Endothelial cell of umbilical vein (primary cell): ENCODE measurements at regions of chr18 and their contacts with region 1.

Region 1: DNA sequence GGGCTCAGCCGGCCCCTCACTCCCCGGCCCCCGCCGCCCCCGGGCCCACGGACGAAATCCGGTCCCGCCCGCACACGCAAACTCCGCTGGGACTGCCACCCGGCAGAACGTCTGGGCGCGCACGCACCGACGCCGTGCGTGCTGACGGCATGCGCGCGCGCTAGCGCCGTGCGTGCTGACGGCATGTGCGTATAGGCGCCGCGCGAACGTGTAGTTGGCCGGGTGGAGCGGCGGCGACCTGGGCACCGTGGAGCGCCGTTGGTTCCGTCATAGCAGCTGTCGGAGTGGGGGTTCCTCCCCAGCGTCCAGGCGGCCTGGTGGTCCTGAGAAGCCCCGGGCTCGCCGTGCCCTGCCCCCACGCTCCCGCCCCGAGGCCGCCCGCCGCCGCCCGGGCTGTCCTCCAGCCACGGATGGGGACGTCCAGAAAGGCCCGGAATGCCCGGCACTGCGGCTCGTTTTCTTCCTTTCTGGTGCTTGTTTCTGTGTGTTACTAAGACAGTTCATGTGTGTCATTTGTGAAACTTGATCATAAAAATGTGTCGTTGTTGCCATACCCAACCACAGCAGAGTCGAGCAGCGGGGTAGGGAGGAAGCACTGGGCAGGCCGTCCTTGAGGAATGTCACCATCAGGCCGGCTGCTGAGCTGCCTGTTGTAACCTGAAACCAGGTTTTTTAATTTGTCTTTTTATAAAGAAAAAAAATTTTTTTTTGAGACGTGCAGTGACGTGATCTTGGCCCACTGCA is at the start of gene TXNL4A:
- DNase-seq: peak; percentile 88
- H3K4me3 ChIP-seq: peak within 1 kb of the TSS; percentile 69 to 96 (median 96)
- H3K27ac ChIP-seq: peak within 1 kb of the TSS; percentile 43
- H3K4me1 ChIP-seq: peaks cover 13% of the 10 kb centered on the region
- H3K27me3 ChIP-seq: no peaks in the 10 kb centered on the region
- CTCF ChIP-seq: no peak
- POLR2A ChIP-seq: peak; percentile 96
- total RNA-seq, gene TXNL4A: 147 and 148 TPM in 2 replicates

Region 2: GRCh38 chr18:79679111-79679872 is 309.3 kb before region 1 on chr18 and contains the start of gene CTDP1:
- CTCF ChIA-PET with region 1: no interaction called
- POLR2A ChIA-PET with region 1: no interaction called
- dilution Hi-C with region 1: no loop called
- intact Hi-C with region 1: loop called (anchors 1 kb)
- DNase-seq: peak; percentile 99
- H3K4me3 ChIP-seq: peak within 1 kb of the TSS; percentile 82 to 99 (median 83)
- H3K27ac ChIP-seq: peak within 1 kb of the TSS; percentile 73
- H3K4me1 ChIP-seq: peaks cover 16% of the 10 kb centered on the region
- H3K27me3 ChIP-seq: no peaks in the 10 kb centered on the region
- CTCF ChIP-seq: no peak
- POLR2A ChIP-seq: peak; percentile 25
- total RNA-seq, gene CTDP1: 23.5 and 27.6 TPM in 2 replicates

Region 3: GRCh38 chr18:79951578-79952455 is 36.8 kb before region 1 on chr18 and contains the start of gene SLC66A2:
- CTCF ChIA-PET with region 1: no interaction called
- POLR2A ChIA-PET with region 1: no interaction called
- dilution Hi-C with region 1: no loop called
- intact Hi-C with region 1: loop called (anchors 1 kb)
- DNase-seq: peak; percentile 78
- H3K4me3 ChIP-seq: peak within 1 kb of the TSS; percentile 50 to 96 (median 71)
- H3K27ac ChIP-seq: peak within 1 kb of the TSS; percentile 4
- H3K4me1 ChIP-seq: peaks cover 5% of the 10 kb centered on the region
- H3K27me3 ChIP-seq: no peaks in the 10 kb centered on the region
- CTCF ChIP-seq: peak in 1 of 2 donors; percentile 7
- POLR2A ChIP-seq: peak; percentile 43
- total RNA-seq, gene SLC66A2: 32.5 and 35.2 TPM in 2 replicates

Region 4: GRCh38 chr18:79964330-79965118 is 24.1 kb before region 1 on chr18 and contains the start of gene HSBP1L1:
- CTCF ChIA-PET with region 1: interaction called, 5 read pairs
- POLR2A ChIA-PET with region 1: no interaction called
- dilution Hi-C with region 1: no loop called
- intact Hi-C with region 1: loop called (anchors 1 kb)
- DNase-seq: peak; percentile 40
- H3K4me3 ChIP-seq: peak within 1 kb of the TSS; percentile 31 to 44 (median 40)
- H3K27ac ChIP-seq: peak within 1 kb of the TSS; percentile 57
- H3K4me1 ChIP-seq: peaks cover 12% of the 10 kb centered on the region
- H3K27me3 ChIP-seq: peaks cover 8 to 11% of the 10 kb centered on the region in 2 experiments
- CTCF ChIP-seq: peak; percentile 9 to 39
- POLR2A ChIP-seq: no peak
- total RNA-seq, gene HSBP1L1: 3.7 and 5.2 TPM in 2 replicates

Region 5: DNA sequence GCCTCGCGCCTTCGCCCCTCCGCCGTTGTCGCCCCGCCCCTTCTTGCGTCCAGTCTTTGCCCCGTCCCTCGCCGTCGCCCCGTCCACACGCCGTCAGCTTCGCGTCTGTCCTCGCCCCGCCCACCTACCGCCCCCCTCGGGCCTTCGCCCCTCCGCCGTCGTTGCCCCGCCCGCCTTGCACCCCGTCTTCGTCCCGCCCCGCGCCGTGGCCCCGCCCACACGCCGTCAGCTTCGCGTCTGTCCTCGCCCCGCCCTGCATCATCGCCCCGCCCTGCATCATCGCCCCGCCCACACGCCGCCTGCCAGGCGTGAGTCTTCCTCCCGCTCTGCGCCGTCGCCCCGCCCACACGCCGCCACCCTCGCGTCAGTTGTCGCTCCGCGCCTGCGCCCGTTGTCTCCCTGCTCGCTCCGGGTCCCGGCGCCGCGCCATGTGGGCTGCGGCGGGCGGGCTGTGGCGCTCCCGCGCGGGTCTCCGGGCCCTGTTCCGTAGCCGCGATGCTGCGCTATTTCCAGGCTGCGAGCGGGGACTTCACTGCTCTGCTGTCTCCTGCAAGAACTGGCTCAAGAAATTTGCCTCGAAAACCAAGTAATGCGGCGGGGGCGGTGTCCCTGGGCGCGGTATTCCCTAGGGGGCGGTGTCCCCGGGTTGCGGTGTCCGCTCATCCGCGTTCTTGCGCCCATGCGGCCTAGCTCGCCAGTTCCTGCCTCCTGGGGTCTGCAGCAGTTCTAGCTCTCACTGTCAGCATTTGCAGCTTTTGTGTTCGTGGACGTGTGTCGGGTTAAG is 45.6 kb after region 1 on chr18 and contains the start of gene RBFA:
- CTCF ChIA-PET with region 1: interaction called, 24 read pairs
- POLR2A ChIA-PET with region 1: interaction called, 7 read pairs
- dilution Hi-C with region 1: no loop called
- intact Hi-C with region 1: loop called (anchors 1 kb)
- DNase-seq: peak; percentile 99
- H3K4me3 ChIP-seq: peak within 1 kb of the TSS; percentile 94 to 97 (median 96)
- H3K27ac ChIP-seq: peak within 1 kb of the TSS; percentile 39
- H3K4me1 ChIP-seq: peaks cover 9% of the 10 kb centered on the region
- H3K27me3 ChIP-seq: no peaks in the 10 kb centered on the region
- CTCF ChIP-seq: peak; percentile 32 to 49
- POLR2A ChIP-seq: peak; percentile 85
- total RNA-seq, gene RBFA: 30.5 and 34.8 TPM in 2 replicates

Region 6: GRCh38 chr18:80108728-80109675 is 120.4 kb after region 1 on chr18 and contains the start of gene ADNP2:
- CTCF ChIA-PET with region 1: no interaction called
- POLR2A ChIA-PET with region 1: no interaction called
- dilution Hi-C with region 1: no loop called
- intact Hi-C with region 1: loop called (anchors 1 kb)
- DNase-seq: peak; percentile 97
- H3K4me3 ChIP-seq: peak within 1 kb of the TSS; percentile 58 to 94 (median 86)
- H3K27ac ChIP-seq: peak within 1 kb of the TSS; percentile 54
- H3K4me1 ChIP-seq: peaks cover 8% of the 10 kb centered on the region
- H3K27me3 ChIP-seq: peaks cover 0 to 6% of the 10 kb centered on the region in 2 experiments
- CTCF ChIP-seq: no peak
- POLR2A ChIP-seq: no peak
- total RNA-seq, gene ADNP2: 19.8 and 20.6 TPM in 2 replicates